ENCODE measurements at regions of chr2 and their contacts with region 1.

Region 1: GRCh38 chr2:157327621-157328500 is 2.2 kb upstream of the ERMN start:
- DNase-seq: peak; percentile 84
- H3K4me3 ChIP-seq: no peak overlapping the region
- H3K27ac ChIP-seq: no peak overlapping the region
- H3K4me1 ChIP-seq: peaks cover 15% of the 10 kb centered on the region
- CTCF ChIP-seq: peak; percentile 97

Region 2: GRCh38 chr2:157433394-157433793 is 105.5 kb after region 1 on chr2:
- CTCF ChIA-PET with region 1: no interaction called
- POLR2A ChIA-PET with region 1: interaction called, 11 read pairs
- intact Hi-C with region 1: no loop called
- DNase-seq: no peak
- H3K4me3 ChIP-seq: no peak overlapping the region
- H3K27ac ChIP-seq: no peak overlapping the region
- H3K4me1 ChIP-seq: peaks cover 55% of the 10 kb centered on the region
- CTCF ChIP-seq: no peak

Region 3: DNA sequence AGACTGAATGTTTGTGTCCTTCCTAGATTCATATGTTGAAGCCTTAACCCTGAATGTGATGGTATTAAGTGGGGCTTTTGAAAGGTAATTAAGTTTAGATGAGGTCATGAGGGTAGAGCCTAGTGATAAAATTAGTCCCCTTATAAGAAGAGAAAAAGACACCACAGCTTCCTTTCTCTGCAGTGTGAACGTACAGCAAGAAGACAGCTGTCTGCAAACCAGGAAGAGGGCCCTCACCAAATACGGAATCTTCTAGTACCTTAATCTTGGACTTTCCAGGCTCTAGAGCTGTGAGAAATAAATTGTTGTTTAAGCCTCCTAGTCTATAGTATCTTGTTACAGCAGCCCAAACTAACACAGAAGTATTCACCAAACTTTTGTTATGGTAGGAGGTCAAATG is 173.2 kb after region 1 on chr2:
- CTCF ChIA-PET with region 1: no interaction called
- POLR2A ChIA-PET with region 1: no interaction called
- intact Hi-C with region 1: no loop called
- DNase-seq: no peak
- H3K4me3 ChIP-seq: no peak overlapping the region
- H3K27ac ChIP-seq: no peak overlapping the region
- H3K4me1 ChIP-seq: no peaks in the 10 kb centered on the region
- CTCF ChIP-seq: no peak

Region 4: GRCh38 chr2:158214438-158214837 is 886.6 kb after region 1 on chr2:
- CTCF ChIA-PET with region 1: no interaction called
- POLR2A ChIA-PET with region 1: no interaction called
- intact Hi-C with region 1: no loop called
- DNase-seq: no peak
- H3K4me3 ChIP-seq: no peak overlapping the region
- H3K27ac ChIP-seq: no peak overlapping the region
- H3K4me1 ChIP-seq: no peaks in the 10 kb centered on the region
- CTCF ChIP-seq: no peak

Measured in OCI-LY7 (cell line).